GM10248 (cell line): ENCODE measurements at regions of chr17 and their contacts with region 1.

Region 1: DNA sequence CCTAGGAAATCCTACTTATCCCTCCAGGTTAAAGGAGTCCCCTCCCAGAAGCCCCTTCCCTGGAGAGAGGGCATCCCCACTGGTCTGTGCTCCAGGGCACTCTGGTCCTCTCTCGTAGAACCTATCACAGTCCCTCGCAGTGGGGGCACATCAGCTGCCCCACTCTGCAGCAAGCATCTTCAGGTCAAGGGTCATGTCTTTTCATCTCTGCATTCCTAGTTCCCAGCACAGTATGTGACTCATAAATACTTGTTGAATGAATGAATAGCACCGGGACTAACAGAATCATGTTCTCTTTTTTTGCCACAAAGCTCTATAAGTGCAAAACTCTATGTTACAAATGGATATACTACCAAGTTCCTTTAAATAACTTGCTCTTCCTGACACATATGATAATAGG is 36.0 kb downstream of the RNF157 start:
- DNase-seq: no peak
- CTCF ChIP-seq: no peak

Region 2: DNA sequence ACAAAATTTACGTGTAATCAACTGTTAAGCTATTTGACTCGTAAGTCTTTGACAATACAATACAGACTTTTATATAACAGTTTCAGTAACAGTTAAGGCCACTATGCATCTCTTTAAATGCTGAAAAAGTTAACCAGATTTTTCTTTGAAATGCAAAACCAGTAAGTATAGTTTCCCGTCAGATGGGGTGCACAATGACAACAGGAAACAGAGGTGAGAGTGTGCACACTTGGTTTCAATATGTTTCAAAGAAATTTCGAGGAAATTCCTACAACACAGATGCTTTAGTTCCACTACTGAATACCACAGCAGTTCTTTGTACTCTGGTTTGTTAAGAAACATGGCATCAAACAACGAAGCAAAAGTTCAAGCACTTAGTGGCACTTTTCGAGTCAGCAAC is 12.4 kb before region 1 on chr17:
- CTCF ChIA-PET with region 1: interaction called, 18 read pairs
- POLR2A ChIA-PET with region 1: no interaction called
- DNase-seq: peak; percentile 62
- CTCF ChIP-seq: no peak

Region 3: DNA sequence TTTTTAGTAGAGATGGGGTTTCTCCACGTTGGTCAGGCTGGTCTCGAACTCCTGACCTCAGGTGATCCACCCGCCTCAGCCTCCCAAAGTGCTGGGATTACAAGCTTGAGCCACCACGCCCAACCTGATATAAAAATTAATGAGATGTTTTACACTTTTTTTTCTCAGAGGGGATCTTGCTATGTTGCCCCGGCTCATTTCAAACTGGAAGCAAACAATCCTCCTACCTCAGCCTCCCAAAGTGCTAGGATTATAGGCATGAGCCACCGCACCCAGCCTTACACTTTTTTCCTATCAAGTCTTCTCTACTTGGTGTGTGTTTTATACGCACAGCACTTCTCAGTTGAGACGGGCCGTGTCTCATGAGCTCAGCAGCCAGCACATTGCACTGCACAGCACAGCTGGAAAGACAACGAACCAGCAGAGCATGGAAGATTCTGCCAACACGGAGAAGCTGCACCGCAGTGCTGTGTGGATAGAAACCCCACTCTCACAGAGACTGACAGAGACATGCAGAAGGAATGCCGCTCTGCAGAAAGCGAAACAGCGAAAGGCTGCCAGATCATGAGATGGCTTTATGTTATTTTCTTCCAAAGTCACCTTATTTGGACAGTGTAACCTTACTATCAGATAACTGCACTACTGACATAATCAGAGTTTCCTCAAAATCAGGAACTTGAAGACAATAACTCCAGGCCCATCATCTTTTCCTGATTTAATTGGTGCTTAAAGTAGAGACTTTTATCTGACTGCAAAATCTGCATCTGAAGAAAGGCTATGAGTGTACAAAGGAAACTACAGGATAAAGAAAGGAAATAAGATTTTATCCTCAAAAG is 110.3 kb after region 1 on chr17:
- CTCF ChIA-PET with region 1: no interaction called
- POLR2A ChIA-PET with region 1: no interaction called
- DNase-seq: no peak
- CTCF ChIP-seq: no peak